ENCODE measurements at regions of chr15 and their contacts with region 1.

Region 1: DNA sequence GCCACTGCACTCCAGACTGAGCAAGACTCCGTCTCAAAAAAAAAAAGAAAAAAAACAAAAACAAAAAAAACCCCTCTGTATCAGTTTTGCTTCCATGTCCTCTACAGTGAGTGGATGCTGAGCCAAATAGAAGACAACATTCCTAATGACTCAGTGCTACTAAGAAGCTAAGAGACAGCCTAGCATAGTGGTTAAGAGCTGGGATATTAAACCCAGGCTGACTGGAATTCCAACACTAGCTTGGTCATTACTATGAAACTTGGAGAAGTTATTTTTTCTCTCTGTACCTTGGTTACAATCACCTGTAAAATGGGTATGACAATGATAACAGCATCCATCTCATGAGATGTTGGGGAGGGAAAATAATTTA is 60.9 kb upstream of the PYGO1 start:
- DNase-seq: no peak

Region 2: GRCh38 chr15:55535436-55535835 is 113.6 kb before region 1 on chr15:
- intact Hi-C with region 1: no loop called
- DNase-seq: no peak

Region 3: DNA sequence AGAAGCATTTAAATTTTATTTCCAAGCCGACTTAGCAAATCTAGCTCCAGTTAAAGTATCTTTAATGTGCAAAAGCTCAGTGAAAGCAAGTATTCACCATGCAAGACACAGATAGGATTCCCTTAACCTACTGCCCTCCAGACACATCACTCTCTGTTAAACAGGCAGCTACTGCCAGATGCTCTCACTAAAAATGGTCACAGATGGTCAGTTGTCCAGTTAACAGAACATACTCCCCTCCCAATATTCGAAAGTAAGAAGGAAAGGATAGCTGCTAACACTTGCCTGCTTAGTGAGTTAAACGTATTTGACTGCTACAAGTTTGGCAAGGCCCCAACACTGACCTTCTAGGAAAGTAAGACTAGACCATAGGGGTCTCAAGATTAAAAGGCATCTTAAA is 20.2 kb after region 1 on chr15:
- intact Hi-C with region 1: no loop called
- DNase-seq: no peak

Region 4: GRCh38 chr15:55703873-55704285 is 54.8 kb after region 1 on chr15:
- intact Hi-C with region 1: no loop called
- DNase-seq: no peak

Region 5: DNA sequence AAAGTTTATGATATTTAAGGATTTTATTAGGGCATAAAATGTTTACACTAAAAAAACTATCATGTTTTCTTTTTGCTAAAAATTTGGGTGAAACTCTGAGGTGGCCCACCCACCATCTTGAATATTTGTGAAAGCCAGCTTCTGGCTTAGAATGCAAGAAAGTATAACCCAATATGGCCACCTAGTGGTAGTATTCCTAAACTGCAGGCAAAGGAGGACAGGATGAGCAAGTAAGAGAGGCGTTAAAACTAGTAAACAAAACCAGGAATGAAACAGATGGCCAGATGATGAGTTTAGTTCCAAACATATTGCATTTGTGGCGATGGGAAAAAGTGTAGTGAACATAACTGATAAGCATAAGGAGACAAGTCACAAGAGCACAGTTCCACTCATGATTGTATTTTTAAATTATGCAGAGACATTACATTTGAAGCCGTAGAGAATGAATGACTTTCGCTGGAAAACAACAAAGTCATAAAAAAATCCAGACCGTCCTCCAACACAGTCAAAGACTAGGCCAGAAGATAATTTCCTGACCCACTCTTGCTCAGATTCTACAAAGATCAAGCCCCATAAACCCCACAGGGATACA is 197.2 kb after region 1 on chr15:
- intact Hi-C with region 1: loop called (anchors 5 kb)
- DNase-seq: no peak

Region 6: DNA sequence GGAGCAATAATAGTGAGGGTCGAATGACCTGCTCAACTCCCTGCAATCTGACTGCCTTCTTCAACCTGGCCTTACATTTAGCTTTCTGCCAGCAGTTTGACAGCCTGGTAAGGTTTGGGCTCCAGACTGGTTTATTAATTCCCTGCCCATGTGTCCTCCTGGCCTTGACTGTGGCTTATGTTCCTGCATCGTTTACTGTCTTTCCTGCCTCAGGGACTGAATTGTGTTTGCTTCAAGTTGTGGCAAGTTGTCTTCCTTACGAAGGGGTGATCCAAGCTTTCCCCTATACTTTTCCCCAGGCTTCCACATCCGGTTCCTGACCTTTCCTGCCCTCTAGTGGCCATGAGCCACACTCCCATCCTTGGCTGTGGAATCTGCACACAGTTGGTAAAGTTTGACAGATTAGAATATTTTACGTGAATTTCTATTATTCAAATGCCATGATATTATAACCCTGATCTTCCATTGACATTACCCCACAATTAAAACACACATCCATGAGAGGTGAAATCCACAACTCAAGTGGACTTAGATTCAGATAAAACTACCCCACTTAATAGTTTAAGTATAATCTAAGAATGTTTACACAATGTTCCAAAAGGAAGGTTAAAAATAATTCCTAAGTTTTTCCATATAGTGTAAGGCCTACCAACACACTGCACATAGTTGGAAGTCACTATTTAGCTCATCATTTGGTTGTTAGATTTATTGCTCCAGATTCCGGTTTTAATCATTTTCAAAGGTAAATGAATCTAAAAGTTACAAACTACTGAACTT is 248.7 kb after region 1 on chr15:
- intact Hi-C with region 1: loop called (anchors 5 kb)
- DNase-seq: no peak

Region 7: GRCh38 chr15:56028430-56028829 is 379.4 kb after region 1 on chr15:
- intact Hi-C with region 1: no loop called
- DNase-seq: no peak

Region 8: DNA sequence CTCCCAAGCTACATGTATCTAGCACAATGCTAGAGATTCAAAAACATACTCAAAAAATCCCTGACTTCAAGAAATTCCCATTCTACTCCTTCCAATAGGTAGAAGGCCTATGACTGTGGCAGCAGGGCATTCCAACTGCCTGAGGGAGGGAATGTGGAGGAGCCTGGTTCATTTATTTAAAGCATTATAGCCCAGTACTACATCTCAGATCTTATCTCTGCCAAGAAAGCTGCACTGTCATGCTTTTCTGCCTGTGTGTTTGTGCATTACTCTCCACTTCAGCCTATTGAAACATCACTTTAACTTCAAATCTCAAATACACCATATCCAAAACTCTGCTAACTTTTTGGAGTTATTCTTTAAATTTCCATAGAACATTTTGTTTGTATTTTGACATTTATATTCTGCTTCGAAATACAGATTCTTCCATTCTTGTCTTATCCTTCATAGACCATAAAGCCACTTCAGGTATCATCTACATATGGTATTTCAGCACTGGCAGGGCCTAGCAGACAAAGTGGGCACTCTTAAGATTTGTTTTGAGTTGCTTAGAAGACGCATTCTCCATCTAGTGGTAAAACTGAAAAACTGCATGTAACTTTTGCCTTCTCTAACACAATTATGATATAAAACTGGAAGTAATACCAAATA is 403.5 kb after region 1 on chr15:
- intact Hi-C with region 1: loop called (anchors 5 kb)
- DNase-seq: no peak